Sciatic nerve (tissue), 2 donors: ENCODE measurements at regions of chr5 and their contacts with region 1.

Region 1: GRCh38 chr5:5419294-5420210 is 2.9 kb upstream of the ICE1 start:
- DNase-seq: no peak
- ATAC-seq: no peak

Region 2: GRCh38 chr5:5141625-5142532 is 277.7 kb before region 1 on chr5:
- intact Hi-C with region 1: loop called (anchors 10 kb)
- DNase-seq: peak; percentile 76
- ATAC-seq: peak; percentile 61